HAP-1 (cell line): ENCODE measurements at regions of chr1 and their contacts with region 1.

Region 1: GRCh38 chr1:110203021-110203661 is 7.0 kb upstream of the KCNC4 start:
- DNase-seq: peak; percentile 50 to 80
- H3K4me3 ChIP-seq: no peak overlapping the region
- H3K4me1 ChIP-seq: no peaks in the 10 kb centered on the region
- H3K27me3 ChIP-seq: no peaks in the 10 kb centered on the region

Region 2: DNA sequence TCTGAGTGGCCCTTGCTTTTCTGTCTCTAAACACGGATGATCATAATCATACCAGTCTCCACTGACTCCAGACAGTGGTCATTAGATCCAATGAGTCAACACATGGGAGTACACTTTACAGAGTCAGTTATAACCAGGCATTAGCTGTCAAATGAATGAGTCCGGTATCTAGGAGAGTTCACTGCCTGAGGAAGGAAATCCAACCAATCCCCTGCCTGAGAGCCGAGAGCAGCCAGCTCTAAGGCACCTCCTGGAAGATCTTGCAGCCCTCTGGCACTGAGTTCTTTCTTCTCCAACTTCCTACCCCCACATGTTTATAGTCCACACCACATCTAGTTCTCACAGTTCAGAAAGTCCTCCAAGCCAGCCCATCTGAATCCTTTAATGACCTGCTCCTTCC is 106.6 kb after region 1 on chr1:
- in situ Hi-C with region 1: loop called (anchors 5 kb)
- DNase-seq: no peak
- H3K4me3 ChIP-seq: no peak overlapping the region
- H3K4me1 ChIP-seq: no peaks in the 10 kb centered on the region
- H3K27me3 ChIP-seq: no peaks in the 10 kb centered on the region

Region 3: GRCh38 chr1:110460253-110461220 is 257.4 kb after region 1 on chr1:
- in situ Hi-C with region 1: loop called (anchors 5 kb)
- DNase-seq: peak; percentile 67 to 87
- H3K4me3 ChIP-seq: no peak overlapping the region
- H3K4me1 ChIP-seq: no peaks in the 10 kb centered on the region
- H3K27me3 ChIP-seq: no peaks in the 10 kb centered on the region

Region 4: GRCh38 chr1:110495926-110496600 is 292.9 kb after region 1 on chr1:
- in situ Hi-C with region 1: loop called (anchors 5 kb)
- DNase-seq: peak; percentile 70 to 90
- H3K4me3 ChIP-seq: no peak overlapping the region
- H3K4me1 ChIP-seq: peaks cover 8% of the 10 kb centered on the region
- H3K27me3 ChIP-seq: no peaks in the 10 kb centered on the region; the same call in 1 of the 2 replicates